ENCODE measurements at regions of chr10 and their contacts with region 1.

Region 1: DNA sequence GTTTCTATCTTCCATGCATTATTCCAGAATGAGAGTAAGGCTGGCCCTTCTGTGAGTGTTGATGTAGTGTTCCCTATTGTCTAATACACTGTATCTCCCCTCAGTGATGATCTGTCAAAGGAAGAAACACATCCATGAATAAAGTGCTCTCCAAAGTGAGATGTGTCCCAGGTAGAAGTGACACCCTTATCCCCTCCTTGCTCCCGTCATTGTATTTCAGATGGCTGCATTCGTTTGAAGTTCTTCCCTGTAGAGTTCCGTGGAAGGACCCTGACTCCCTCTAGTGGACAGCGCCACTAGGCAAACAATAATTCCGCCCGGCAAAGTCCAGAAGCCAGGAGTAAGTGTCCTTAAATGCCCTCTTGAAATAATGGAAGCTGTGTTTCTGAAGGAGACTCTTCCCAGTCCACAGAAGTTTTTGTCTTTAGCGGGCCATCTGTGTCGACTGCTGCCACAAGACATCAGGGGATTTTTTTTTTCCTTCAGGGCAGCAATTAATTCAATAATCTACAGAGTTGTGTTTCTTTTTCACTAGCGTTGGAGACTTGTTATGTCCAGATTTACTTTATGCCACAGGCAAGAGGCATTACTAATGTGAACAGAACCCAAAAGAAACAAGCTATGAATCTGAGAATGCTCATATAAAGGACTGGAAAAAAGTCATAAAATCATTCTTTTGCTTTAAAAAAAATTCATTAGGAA is 64.6 kb downstream of the THNSL1 start:
- DNase-seq: peak; percentile 87
- H3K4me3 ChIP-seq: peak overlapping the region; percentile 11; the same call in 1 of the 2 replicates
- H3K27me3 ChIP-seq: no peaks in the 10 kb centered on the region
- CTCF ChIP-seq: peak; percentile 95

Region 2: GRCh38 chr10:24617771-24618391 is 463.1 kb before region 1 on chr10:
- CTCF ChIA-PET with region 1: interaction called, 14 read pairs
- POLR2A ChIA-PET with region 1: no interaction called
- DNase-seq: no peak
- H3K4me3 ChIP-seq: no peak overlapping the region
- H3K27me3 ChIP-seq: no peaks in the 10 kb centered on the region
- CTCF ChIP-seq: peak; percentile 72

Region 3: DNA sequence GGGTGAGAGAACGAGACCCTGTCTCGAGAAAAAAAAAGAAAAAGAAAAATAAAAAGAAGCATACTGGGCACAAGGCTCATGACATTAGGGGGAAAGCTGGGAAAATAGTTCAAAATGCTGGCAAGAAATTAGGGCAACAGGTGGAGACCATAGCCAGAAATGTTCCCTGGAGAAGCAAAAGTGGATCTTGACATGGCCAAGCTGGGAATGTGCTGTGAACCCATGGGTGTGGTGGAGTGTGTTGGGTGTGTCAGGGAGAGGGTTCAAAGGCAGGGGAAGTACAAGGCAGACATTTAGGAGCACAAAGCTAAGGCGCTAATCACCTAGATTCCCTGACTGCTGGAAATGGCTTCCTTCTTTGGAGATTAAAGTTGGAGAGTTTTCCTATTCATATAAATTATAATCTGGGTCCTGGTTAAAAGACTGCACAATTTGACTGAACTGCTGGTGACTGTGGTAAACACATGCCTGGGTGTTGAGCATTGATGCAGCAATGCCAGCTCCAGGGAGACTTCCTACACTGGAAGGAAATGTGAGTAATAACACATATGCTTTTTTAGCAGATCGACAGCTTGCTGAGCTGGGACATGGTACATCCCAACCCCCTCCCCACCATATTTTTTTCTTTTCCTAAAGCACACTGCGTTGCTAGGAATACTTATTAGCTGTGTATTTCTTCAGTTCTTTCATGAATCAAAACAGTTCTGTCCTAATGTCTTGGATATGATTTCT is 287.2 kb before region 1 on chr10:
- CTCF ChIA-PET with region 1: no interaction called
- POLR2A ChIA-PET with region 1: no interaction called
- DNase-seq: no peak
- H3K4me3 ChIP-seq: no peak overlapping the region
- H3K27me3 ChIP-seq: 0 out of 2 replicates have a peak, but pooled peaks cover 2% of the 10 kb centered on the region
- CTCF ChIP-seq: no peak

Region 4: GRCh38 chr10:24952707-24953645 is 128.1 kb before region 1 on chr10:
- CTCF ChIA-PET with region 1: interaction called, 4 read pairs
- POLR2A ChIA-PET with region 1: interaction called, 13 read pairs
- DNase-seq: no peak
- H3K4me3 ChIP-seq: peak overlapping the region; percentile 55
- H3K27me3 ChIP-seq: no peaks in the 10 kb centered on the region
- CTCF ChIP-seq: no peak

Region 5: GRCh38 chr10:25061711-25062449 is 19.2 kb before region 1 on chr10:
- CTCF ChIA-PET with region 1: interaction called, 40 read pairs
- POLR2A ChIA-PET with region 1: no interaction called
- DNase-seq: peak; percentile 42
- H3K4me3 ChIP-seq: no peak overlapping the region
- H3K27me3 ChIP-seq: no peaks in the 10 kb centered on the region
- CTCF ChIP-seq: no peak

Region 6: DNA sequence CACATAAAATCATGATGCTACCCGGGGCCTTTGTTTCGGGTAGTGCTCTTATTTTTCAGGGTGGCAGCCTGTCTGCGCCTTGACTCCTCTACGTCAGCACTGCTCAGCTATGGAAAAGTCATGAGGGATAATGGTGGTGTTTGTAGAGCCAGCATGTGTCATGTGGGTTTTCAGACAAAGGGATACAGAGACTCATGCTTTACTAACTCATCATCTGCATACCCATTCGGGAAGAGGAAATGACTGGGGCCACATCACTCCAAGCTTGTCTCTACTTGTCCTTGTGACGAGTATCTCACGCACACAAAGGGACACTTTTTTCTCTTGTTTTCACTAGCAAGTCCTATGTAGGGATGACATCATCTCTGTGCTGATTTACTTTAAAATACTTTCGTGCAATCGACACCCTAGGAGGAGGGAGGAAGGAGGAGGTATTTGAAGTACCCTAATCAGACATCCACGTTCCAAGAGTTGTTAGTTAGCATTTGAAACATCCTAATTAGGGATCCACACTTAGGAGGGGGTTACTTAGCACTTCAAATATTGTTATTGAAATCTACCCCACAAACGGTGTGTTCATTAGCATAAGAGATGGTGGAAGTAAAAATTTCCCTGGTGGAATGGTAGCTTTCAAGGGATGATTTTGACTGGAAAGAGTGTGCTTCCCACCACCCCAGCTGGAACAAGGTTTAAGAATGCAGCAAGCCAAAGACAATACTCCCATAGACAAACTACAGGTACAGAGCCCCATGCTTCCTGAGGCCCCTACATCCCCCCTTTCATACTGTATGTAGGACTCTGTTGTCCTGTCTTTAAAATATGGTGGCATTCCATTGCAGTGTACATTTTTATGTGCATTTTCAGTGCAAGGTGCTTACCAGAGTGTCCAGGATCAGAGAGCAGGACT is 12.6 kb before region 1 on chr10:
- CTCF ChIA-PET with region 1: interaction called, 40 read pairs
- POLR2A ChIA-PET with region 1: no interaction called
- DNase-seq: no peak
- H3K4me3 ChIP-seq: no peak overlapping the region
- H3K27me3 ChIP-seq: no peaks in the 10 kb centered on the region
- CTCF ChIP-seq: no peak

Region 7: DNA sequence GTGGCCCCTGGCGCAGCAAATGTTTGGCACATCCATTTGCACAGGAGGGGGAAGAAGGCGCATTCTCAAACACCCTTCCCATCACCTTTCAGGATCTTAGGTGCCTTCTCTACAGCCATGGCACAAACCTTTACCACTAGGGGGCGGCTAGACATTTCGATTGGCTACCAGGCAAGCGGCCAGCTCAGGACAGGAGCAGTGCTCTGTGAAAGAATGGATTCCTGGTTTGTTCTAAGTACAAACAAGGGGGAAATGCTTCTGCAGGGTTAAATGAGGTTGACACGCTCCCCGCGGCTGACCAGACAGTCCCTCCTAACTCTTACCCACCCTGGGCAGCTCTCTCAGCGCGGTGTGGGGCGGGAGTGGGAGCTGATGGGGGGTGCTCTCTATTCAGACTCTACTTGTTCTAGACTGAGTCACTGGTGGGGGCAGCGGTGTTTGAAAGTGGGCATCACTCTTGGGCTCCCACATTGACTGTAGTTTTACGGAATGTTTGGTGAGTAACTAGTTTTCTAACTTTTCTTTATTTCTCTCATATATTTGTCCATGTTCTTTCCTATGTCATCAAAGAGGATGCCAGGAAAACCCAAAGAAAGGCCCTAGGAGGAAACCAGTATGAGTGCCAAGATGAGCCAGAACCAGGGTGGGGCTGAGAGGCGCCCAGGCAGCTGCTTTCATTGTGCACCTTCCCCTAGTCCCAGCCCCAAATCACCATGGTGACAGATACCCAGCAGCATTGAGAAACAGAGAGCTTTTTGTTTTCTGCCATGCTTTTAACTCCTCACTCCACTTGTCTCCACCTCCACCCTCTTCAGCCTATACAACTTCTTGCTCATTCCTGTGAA is 32.4 kb after region 1 on chr10:
- CTCF ChIA-PET with region 1: interaction called, 15 read pairs
- POLR2A ChIA-PET with region 1: no interaction called
- DNase-seq: no peak
- H3K4me3 ChIP-seq: no peak overlapping the region
- H3K27me3 ChIP-seq: no peaks in the 10 kb centered on the region
- CTCF ChIP-seq: peak; percentile 88

Region 8: GRCh38 chr10:25125201-25125611 is 44.2 kb after region 1 on chr10:
- CTCF ChIA-PET with region 1: no interaction called
- POLR2A ChIA-PET with region 1: no interaction called
- DNase-seq: no peak
- H3K4me3 ChIP-seq: no peak overlapping the region
- H3K27me3 ChIP-seq: no peaks in the 10 kb centered on the region
- CTCF ChIP-seq: no peak